ENCODE measurements at regions of chr6 and their contacts with region 1.

Region 1: DNA sequence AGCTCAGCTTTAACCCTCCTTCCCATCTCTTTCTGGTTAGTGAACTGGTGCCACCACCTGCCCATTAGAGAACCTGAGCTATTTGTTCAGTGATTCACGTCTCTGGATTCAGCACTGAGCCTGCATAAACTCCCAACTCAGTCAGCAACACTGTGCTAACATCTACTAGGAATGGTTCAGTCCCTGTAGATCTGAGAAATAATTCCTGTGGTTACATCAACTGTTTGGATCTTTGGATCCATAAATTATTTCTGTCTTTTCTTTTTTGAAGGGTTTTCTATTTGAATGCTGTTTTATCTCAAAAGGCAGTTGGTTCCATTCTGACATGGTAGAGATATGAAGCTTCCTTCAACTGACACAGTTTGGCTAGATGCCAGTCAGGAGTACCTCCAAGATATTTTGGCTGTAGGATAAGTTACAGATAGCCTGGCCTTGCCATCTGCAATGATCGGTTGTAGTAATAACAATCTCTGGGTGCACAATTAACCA is 125.8 kb downstream of the TRMT11 start:
- DNase-seq: peak; percentile 2
- H3K4me3 Mint-ChIP-seq: no peak overlapping the region
- H3K27ac Mint-ChIP-seq: no peak overlapping the region
- H3K4me1 Mint-ChIP-seq: no peaks in the 10 kb centered on the region
- H3K27me3 Mint-ChIP-seq: no peaks in the 10 kb centered on the region
- CTCF ChIP-seq: no peak

Region 2: DNA sequence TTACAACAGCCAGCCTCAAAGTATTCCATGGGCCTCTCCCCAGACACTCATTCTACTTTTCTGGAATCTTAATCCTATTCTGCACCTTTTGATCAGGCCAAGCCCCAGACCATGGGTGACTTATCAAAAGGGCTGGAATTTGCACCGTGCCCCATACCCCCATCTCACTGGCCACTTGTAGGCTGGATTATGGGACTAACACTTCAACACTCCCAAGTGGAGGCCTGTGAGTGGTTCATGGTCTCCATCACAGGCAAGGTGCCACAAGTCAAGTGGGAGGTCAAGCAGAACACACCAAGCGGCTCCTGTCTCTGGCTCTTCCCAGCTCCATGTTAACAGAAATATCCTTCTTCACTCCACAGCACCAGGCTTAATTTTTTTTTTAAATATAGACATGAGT is 575.1 kb before region 1 on chr6:
- CTCF ChIA-PET with region 1: no interaction called
- intact Hi-C with region 1: no loop called
- DNase-seq: no peak
- H3K4me3 Mint-ChIP-seq: no peak overlapping the region
- H3K27ac Mint-ChIP-seq: no peak overlapping the region
- H3K4me1 Mint-ChIP-seq: no peaks in the 10 kb centered on the region
- H3K27me3 Mint-ChIP-seq: peaks cover 29% of the 10 kb centered on the region
- CTCF ChIP-seq: no peak

Region 3: DNA sequence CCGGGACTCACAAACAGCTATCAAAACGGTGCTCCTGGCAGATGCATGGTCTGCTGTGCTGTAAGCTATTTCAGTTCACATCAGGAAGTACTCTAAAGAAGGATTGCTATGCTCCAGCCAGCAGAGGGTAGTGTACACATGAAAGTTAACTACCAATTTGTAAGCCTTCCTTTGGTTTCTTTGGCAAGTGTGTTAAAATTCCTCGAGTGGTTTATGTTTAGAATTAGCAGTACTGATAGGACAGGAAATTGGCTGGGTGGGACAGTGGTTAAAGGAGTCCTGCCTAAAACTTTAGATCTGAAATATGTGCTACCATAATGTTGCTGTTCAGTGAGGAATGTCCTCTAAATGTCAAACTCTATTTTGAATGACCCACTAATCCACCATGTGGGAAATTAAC is 78.5 kb before region 1 on chr6:
- CTCF ChIA-PET with region 1: interaction called, 5 read pairs
- intact Hi-C with region 1: loop called (anchors 2 kb)
- DNase-seq: peak; percentile 33
- H3K4me3 Mint-ChIP-seq: no peak overlapping the region
- H3K27ac Mint-ChIP-seq: no peak overlapping the region
- H3K4me1 Mint-ChIP-seq: no peaks in the 10 kb centered on the region
- H3K27me3 Mint-ChIP-seq: no peaks in the 10 kb centered on the region
- CTCF ChIP-seq: no peak

Region 4: DNA sequence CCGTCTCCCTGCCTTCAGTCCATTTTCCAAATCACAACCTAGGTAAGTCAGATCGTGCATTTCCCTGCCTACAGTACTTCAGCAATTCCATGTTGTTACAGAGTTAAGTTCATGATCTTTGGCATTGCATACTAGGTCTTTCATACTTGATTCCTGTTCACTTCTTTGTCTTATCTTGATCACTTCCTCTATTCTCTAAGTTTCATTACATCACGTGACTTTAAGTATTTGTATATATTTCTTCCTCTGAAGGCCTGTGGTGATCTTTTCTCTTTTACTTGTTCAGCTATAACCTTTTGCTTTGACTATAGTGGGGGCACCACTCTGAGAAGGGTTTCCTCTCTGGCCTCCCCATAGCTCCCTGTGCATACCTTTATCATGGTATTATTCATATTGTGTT is 25.6 kb before region 1 on chr6:
- CTCF ChIA-PET with region 1: no interaction called
- intact Hi-C with region 1: no loop called
- DNase-seq: no peak
- H3K4me3 Mint-ChIP-seq: no peak overlapping the region
- H3K27ac Mint-ChIP-seq: no peak overlapping the region
- H3K4me1 Mint-ChIP-seq: peaks cover 8% of the 10 kb centered on the region
- H3K27me3 Mint-ChIP-seq: no peaks in the 10 kb centered on the region
- CTCF ChIP-seq: no peak

Measured in Calu3 (cell line).